ENCODE measurements at regions of chr18 and their contacts with region 1.

Region 1: DNA sequence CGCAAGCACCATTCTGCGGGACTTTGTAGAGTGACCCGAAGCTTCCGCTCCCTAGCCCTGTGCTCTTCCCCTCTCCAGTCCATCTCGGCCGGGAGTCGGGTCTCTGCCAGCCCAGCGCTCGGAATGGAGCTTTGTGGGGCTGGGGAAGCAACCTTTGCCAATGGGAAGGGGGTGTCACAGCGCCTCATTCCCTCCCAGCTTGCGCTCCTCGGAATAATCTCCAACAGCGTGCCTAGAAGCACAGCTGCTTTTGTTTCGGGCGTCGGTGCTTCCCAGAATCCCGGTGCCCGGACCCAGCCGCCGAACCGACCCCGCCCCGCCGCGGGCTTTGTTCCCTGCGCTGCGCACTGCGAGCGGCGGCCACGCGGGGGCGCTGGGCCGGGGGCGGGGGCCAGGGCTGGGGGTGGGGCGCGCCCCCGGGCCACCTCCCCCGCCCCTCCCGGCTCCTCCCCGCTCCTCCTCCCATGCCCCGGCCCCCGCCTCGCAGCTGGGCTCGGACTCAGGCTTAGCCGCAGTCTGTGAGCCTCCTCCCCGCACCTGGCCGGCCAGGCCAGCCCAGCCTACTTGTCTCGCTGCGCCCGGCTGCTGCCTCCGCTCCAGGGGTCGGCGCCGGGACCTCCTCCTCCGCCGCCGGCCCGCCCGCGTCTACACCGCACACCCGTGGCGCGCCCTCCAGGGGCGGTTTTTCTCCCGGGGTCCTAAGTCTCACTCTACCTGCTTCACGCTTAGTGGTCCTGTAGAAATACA is 77.7 kb upstream of the SMAD2 start:
- DNase-seq: no peak
- H3K4me3 ChIP-seq: peak overlapping the region; percentile 49
- H3K27me3 ChIP-seq: peaks cover 13% of the 10 kb centered on the region
- CTCF ChIP-seq: peak; percentile 28; the same call in 1 of the 2 replicates

Region 2: DNA sequence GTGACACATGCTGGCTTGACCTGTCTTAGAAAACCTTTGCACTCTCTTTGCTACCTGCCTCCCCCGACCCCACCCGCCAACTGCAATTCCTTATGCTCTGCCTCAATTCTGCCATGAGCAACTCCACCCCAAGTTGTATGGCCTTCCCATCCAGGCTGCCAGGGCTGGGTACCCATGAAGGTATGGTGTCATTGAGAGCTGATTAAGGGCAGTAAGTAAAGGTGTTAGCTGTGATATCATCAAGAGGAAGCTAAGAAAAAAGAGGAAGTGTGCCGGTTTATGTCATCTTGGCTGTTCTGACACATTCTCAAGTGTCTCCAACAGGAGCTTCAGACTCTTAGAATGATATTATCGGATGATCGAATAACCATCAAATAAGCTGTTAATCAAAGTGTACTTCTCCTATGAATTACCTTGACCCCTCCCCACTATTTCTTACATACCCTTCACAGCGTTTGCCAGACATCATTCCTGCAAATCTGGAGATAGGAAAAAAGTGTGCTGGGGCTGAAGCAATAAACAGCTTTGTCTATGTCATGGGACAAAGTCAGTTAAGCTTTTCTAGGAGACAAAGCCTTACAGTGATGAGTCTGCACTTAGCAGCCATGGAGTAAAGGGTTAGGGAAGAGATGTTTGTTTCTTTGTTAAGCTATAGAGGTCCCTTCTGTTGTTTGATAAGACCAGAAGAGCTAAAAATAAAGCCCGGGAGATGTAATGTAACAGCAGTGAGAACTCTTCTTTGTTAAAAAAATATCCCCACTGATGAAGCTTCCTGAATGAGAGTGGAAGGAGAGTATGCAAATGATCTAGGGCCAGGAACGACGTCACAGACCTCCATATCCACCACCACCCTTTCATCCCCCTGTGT is 37.2 kb before region 1 on chr18:
- CTCF ChIA-PET with region 1: interaction called, 11 read pairs
- POLR2A ChIA-PET with region 1: no interaction called
- DNase-seq: no peak
- H3K4me3 ChIP-seq: no peak overlapping the region
- H3K27me3 ChIP-seq: peaks cover 8% of the 10 kb centered on the region
- CTCF ChIP-seq: no peak

Region 3: GRCh38 chr18:47997338-47997780 is 10.8 kb before region 1 on chr18:
- CTCF ChIA-PET with region 1: interaction called, 13 read pairs
- POLR2A ChIA-PET with region 1: no interaction called
- DNase-seq: no peak
- H3K4me3 ChIP-seq: no peak overlapping the region
- H3K27me3 ChIP-seq: peaks cover 3% of the 10 kb centered on the region
- CTCF ChIP-seq: peak; percentile 37; the same call in 1 of the 2 replicates